ENCODE measurements at regions of chr1 and their contacts with region 1.

Region 1: DNA sequence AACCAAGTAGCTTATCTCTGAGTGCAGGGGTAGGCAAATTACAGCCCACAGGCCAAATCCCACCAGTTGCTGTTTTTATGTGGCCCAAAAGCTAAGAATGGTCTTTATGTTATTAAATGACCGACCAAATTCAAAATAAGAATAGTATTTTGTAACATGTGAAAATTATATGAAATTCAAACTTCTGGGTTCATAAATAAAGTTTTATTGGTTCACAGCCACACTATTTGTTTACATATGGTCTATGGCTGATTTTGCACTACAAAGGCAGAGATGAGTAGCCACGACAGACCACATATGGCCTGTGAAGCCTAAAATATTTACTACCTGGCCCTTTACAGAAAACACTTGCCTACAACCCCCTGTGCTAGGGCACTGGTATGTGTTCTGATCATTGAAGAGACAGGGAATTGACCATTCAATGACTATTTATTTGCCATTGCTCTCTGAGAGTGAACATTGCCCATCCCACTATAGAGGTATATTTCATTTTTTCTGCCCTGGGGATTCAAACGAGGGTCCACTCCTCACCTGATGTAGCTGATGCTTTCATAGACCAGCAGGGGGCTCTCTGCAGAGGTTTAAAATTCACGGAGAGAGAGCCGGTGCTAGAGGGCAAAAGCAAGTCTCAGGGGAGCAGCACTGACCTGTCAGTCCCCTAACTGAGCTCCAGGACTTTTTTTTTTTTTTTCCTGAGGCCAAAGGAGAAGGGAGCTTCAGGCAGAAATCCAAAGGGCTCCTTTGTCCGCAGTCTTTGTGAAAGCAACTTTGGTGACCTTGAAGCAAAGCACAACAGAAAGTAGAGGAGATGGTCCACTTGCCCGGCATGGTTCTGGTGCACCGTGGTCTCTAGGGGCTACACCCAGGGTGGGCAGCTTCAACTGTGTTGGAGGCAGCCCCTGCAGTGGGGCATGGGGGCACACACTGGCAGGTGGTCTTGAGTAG is 7.3 kb upstream of the GNL2 start:
- DNase-seq: peak; percentile 51
- H3K27ac ChIP-seq: no peak overlapping the region
- CTCF ChIP-seq: peak; percentile 51

Region 2: GRCh38 chr1:37634244-37634991 is 31.4 kb after region 1 on chr1 and contains the start of gene RSPO1:
- CTCF ChIA-PET with region 1: interaction called, 12 read pairs
- POLR2A ChIA-PET with region 1: no interaction called
- DNase-seq: peak; percentile 24
- H3K27ac ChIP-seq: no peak within 1 kb of the TSS
- CTCF ChIP-seq: no peak

Region 3: GRCh38 chr1:37682334-37682987 is 79.4 kb after region 1 on chr1:
- CTCF ChIA-PET with region 1: interaction called, 17 read pairs
- POLR2A ChIA-PET with region 1: no interaction called
- DNase-seq: peak; percentile 59
- H3K27ac ChIP-seq: 0 out of 2 replicates have a peak overlapping the region, but pooled peaks have one; percentile 36
- CTCF ChIP-seq: peak; percentile 84

Measured in RWPE1 (cell line).